ENCODE measurements at regions of chr5 and their contacts with region 1.

Region 1: DNA sequence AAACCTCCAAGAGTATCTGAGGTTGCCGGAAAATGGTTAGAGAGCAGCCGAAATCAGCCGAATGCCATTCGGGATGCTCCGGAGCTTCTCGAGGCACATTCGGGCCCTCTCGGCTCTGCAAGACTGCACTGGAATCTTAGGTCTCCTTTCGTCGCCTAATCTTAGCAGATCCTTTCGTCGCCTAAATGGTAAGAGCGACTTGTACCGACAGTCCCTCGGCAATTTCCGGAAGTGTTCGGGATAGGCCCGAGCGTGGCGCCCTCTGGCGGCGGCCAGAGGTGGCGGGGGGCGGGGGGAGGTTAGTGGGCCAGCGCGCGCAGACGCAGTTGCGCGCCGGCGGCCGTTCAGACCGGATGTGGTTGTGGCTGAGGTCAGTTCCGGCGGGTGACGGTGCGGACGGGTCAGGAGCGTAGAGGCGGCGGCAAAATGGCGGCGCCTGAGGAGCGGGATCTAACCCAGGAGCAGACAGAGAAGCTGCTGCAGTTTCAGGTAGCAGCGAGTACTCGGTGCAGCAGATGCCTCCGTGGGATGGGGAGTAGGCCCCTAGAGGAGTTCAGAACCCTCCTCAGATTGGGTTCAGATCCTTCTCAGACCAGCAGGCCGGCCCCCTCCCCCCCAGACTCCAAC is at the start of gene FAF2:
- DNase-seq: peak; percentile 98
- ATAC-seq: peak; percentile 99
- total RNA-seq, gene FAF2: 15.7 TPM

Region 2: DNA sequence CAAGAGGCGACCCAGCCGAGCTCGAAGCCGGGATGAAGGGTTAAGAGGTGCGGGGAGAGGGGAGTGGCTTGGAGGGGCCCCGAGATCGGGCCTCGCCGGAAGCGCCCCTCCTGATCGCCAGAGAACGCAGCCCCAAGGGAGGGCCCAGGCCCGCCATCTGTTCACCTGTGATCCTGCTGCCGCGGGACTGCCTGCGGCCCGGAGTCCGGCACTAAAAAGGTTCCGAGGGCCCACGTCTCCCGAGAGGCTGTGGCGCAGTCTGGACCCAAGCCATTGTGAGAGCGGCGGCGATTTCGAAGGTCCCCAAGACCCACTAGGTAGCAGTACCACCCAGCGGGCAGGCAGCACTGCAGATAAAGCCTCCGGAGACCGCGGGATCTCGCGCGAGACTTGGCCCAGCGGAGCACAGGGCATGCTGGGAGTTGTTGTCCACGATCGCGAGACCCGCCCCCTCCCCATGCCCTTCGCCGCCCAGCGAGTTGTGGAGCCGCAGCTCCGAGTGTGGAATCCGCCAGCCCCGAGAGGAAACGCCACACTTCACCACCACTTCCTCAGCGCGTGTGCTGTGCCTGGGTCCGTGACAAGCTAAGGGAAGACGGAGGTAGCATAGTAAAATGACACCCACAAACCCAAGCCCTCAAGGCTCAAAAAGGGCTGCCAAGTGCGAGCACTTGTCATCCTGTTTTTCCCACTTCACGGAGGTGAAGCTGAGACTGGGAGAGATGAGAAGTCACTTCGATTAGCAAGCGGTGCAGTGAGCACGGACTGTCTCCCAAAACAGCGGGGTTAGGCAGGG is 86.5 kb before region 1 on chr5 and contains the start of gene KIAA1191:
- intact Hi-C with region 1: loop called (anchors 1 kb)
- DNase-seq: peak; percentile 99
- ATAC-seq: peak; percentile 96
- total RNA-seq, gene KIAA1191: 76.0 TPM

Region 3: DNA sequence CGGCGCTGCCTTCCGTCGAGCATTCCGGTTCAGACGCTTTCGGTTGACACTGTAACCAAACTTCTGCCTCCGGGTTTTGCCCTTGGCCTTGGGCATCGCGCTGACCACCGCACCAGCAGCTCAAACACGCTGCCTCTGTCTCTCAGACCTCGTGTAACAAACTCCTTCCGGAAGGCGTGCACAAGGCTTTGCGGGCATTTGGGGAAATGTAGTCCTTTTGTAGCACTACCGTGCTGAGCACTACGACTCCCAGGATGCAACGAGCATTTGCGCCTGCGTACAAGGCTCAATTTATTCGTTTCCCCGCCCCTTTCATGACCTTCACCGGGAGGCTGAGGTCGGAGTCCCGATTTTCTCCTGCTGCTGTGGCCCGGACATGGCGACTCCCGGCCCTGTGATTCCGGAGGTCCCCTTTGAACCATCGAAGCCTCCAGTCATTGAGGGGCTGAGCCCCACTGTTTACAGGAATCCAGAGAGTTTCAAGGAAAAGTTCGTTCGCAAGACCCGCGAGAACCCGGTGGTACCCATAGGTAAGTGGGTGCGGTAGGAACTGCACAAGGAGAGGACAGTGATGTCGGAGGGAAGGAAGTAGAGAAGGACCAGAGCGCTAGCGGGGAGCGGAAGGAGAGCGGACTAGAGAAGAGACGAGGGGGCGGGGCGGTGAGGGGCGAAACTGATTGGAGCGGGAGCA is 59.5 kb before region 1 on chr5 and contains the starts of genes HIGD2A and NOP16:
- intact Hi-C with region 1: loop called (anchors 2 kb)
- DNase-seq: peak; percentile 100
- ATAC-seq: peak; percentile 97
- total RNA-seq, gene HIGD2A: 218 TPM
- total RNA-seq, gene NOP16: 22.6 TPM

Region 4: DNA sequence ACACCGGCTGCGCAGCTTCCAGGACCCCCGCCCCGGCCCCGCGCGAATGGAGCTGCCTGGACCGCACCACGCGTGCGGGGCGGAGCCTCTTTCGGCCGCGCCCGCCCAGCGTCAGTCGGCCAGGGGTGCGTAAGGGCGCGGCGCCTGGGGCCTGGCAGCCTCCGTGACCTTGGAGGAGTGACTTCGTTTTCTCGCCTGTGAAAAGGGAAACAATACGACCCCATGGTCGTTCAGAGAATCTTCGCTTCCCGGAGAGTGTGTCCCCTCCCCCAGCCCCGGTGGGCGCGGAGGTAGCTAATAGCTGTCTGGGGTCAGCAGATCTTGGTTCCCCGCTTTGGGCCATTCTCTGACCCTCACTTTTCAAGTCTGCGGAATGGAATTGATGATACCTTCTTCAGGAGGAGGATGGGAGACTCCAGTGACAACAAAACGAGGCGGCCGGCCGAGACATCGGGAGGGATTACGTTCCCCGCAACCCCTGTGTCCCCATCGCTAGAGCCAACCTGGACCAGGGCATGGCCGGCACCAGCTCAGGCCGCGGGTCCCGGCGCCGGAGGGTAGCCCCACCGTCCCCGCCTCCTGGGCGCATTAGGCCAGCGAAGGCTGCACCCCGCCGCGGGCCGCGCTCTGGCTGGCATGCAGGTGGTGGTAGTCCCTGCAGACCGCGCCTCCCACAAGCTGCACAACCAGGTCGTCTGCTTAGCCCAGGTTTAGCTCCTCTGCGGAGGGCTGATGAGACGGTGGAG is 95.5 kb after region 1 on chr5:
- intact Hi-C with region 1: loop called (anchors 2 kb)
- DNase-seq: peak; percentile 92
- ATAC-seq: peak; percentile 93

Region 5: DNA sequence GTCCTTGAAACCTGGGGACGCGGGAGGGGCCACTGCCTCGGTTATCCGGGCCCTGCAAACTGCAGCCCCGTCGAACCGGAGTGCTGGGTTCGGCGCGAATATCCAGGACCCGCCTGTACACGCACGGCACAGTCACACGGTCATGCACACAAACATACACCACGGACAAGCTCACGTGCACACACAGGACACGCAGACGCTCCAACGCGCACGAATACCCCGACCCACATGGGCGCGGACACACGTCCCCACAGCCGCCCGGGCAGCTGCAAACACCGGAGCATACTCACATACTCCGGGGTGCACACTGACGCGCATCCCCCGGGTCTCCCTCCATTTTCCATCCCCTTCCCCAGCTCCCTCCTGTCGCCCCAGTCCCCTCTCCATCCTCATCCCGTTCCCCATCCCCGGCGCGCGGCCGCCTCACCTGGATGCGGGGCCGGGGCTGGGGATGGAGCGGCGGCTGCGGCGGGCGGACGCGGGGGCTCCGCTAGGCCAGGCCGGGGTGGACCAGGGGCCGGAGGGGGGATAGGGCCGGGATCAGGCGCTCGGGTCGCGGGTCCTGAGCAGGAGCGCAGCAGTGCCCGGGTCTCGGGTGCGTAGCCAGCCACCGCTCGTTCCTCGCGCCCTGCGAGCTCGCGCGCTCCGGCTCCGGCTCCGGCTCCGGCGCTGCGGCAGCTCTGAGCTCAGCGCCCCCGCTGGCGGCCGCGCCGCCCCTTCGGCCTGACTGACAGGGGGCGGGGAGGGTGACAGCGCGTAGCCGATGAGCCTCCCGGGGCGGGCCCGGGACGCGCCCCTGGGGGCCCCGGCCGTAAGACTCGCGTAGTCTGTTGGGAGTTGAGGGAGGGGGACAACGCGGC is 182.0 kb after region 1 on chr5 and contains the starts of genes EIF4E1B and SNCB:
- intact Hi-C with region 1: no loop called
- DNase-seq: no peak
- ATAC-seq: peak; percentile 70
- total RNA-seq, gene EIF4E1B: not detected
- total RNA-seq, gene SNCB: not detected

Measured in Right ventricle myocardium inferior (tissue), 1 donor.